ENCODE measurements at regions of chr10 and their contacts with region 1.

Region 1: GRCh38 chr10:96374985-96375830 is 16.4 kb upstream of the OPALIN start:
- DNase-seq: no peak
- H3K4me3 ChIP-seq: peak overlapping the region; percentile 22 to 60 (median 36)
- H3K27ac ChIP-seq: no peak overlapping the region
- H3K4me1 ChIP-seq: peaks cover 5 to 32% (median 9%) of the 10 kb centered on the region in 3 donors
- H3K27me3 ChIP-seq: peaks cover 0 to 81% (median 0%) of the 10 kb centered on the region in 4 donors
- CTCF ChIP-seq: peak; percentile 85 to 94 (median 88)
- POLR2A ChIP-seq: no peak

Region 2: GRCh38 chr10:97025613-97026242 is 650.5 kb after region 1 on chr10:
- intact Hi-C with region 1: loop called (anchors 10 kb)
- DNase-seq: no peak
- H3K4me3 ChIP-seq: no peak overlapping the region
- H3K27ac ChIP-seq: no peak overlapping the region
- H3K4me1 ChIP-seq: peaks cover 0 to 20% (median 8%) of the 10 kb centered on the region in 3 donors
- H3K27me3 ChIP-seq: peaks cover 0 to 12% (median 0%) of the 10 kb centered on the region in 4 donors
- CTCF ChIP-seq: peak; percentile 28 to 78 (median 62)
- POLR2A ChIP-seq: no peak